ENCODE measurements at regions of chr2 and their contacts with region 1.

Region 1: GRCh38 chr2:119476301-119477021 is 44.8 kb downstream of the TMEM37 start:
- DNase-seq: peak; percentile 65
- H3K4me3 Mint-ChIP-seq: no peak overlapping the region
- H3K27ac Mint-ChIP-seq: no peak overlapping the region
- H3K4me1 Mint-ChIP-seq: peaks cover 5% of the 10 kb centered on the region
- H3K27me3 Mint-ChIP-seq: no peaks in the 10 kb centered on the region
- CTCF ChIP-seq: peak; percentile 98

Region 2: GRCh38 chr2:118738524-118739308 is 737.7 kb before region 1 on chr2:
- CTCF ChIA-PET with region 1: no interaction called
- POLR2A ChIA-PET with region 1: no interaction called
- intact Hi-C with region 1: no loop called
- DNase-seq: peak; percentile 97
- H3K4me3 Mint-ChIP-seq: no peak overlapping the region
- H3K27ac Mint-ChIP-seq: peak overlapping the region; percentile 39
- H3K4me1 Mint-ChIP-seq: peaks cover 16% of the 10 kb centered on the region
- H3K27me3 Mint-ChIP-seq: no peaks in the 10 kb centered on the region
- CTCF ChIP-seq: no peak

Region 3: GRCh38 chr2:119011162-119011909 is 465.1 kb before region 1 on chr2:
- CTCF ChIA-PET with region 1: no interaction called
- POLR2A ChIA-PET with region 1: no interaction called
- intact Hi-C with region 1: loop called (anchors 5 kb)
- DNase-seq: no peak
- H3K4me3 Mint-ChIP-seq: no peak overlapping the region
- H3K27ac Mint-ChIP-seq: no peak overlapping the region
- H3K4me1 Mint-ChIP-seq: no peaks in the 10 kb centered on the region
- H3K27me3 Mint-ChIP-seq: peaks cover 37% of the 10 kb centered on the region
- CTCF ChIP-seq: peak; percentile 24

Region 4: DNA sequence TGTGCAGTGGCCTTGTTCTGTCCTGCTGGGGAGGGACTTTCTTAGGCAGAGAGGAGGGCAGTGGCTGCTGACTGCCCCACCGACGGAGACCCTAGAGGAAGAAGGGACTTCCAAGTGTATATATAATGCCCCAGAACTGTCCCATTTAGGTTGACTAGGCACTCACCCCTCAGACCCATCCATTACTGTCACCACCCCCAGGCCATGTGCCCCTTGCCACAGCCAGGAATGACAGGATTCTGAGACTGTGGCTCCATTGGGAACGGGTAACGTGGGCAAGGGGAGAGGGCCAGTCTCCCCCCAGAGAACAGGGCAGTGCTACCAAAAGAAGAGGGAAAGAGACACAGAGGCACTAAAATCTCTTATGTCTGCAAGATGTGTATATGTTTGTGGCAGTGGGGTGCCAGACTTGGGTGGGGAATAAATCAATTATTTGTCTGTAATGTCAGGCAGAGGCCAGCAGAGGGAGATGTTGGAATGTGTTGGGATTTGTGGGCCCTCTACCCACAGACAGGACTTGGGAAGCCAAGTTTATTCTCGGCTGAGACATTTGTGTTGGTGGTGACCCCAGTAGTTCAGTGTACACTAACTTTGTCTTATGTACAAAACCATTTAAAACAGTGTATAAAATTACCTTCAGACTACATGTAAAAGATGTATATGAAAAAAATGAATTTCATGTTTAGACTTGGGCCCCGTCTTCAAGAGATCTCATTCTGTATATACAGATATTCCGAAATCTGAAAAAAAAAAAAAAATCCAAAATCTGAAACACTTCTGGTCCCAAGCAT is 68.8 kb before region 1 on chr2:
- CTCF ChIA-PET with region 1: interaction called, 124 read pairs
- POLR2A ChIA-PET with region 1: interaction called, 7 read pairs
- intact Hi-C with region 1: loop called (anchors 1 kb)
- DNase-seq: peak; percentile 64
- H3K4me3 Mint-ChIP-seq: no peak overlapping the region
- H3K27ac Mint-ChIP-seq: no peak overlapping the region
- H3K4me1 Mint-ChIP-seq: peaks cover 6% of the 10 kb centered on the region
- H3K27me3 Mint-ChIP-seq: no peaks in the 10 kb centered on the region
- CTCF ChIP-seq: peak; percentile 66

Region 5: GRCh38 chr2:119414894-119415293 is 61.6 kb before region 1 on chr2:
- CTCF ChIA-PET with region 1: interaction called, 124 read pairs
- POLR2A ChIA-PET with region 1: interaction called, 7 read pairs
- intact Hi-C with region 1: no loop called
- DNase-seq: no peak
- H3K4me3 Mint-ChIP-seq: no peak overlapping the region
- H3K27ac Mint-ChIP-seq: no peak overlapping the region
- H3K4me1 Mint-ChIP-seq: no peaks in the 10 kb centered on the region
- H3K27me3 Mint-ChIP-seq: no peaks in the 10 kb centered on the region
- CTCF ChIP-seq: no peak

Region 6: GRCh38 chr2:119441376-119442225 is 34.9 kb before region 1 on chr2:
- CTCF ChIA-PET with region 1: interaction called, 12 read pairs
- POLR2A ChIA-PET with region 1: no interaction called
- intact Hi-C with region 1: no loop called
- DNase-seq: no peak
- H3K4me3 Mint-ChIP-seq: no peak overlapping the region
- H3K27ac Mint-ChIP-seq: no peak overlapping the region
- H3K4me1 Mint-ChIP-seq: no peaks in the 10 kb centered on the region
- H3K27me3 Mint-ChIP-seq: no peaks in the 10 kb centered on the region
- CTCF ChIP-seq: no peak

Region 7: GRCh38 chr2:119459841-119460475 is 16.5 kb before region 1 on chr2:
- CTCF ChIA-PET with region 1: interaction called, 41 read pairs
- POLR2A ChIA-PET with region 1: no interaction called
- intact Hi-C with region 1: no loop called
- DNase-seq: no peak
- H3K4me3 Mint-ChIP-seq: no peak overlapping the region
- H3K27ac Mint-ChIP-seq: no peak overlapping the region
- H3K4me1 Mint-ChIP-seq: peaks cover 6% of the 10 kb centered on the region
- H3K27me3 Mint-ChIP-seq: no peaks in the 10 kb centered on the region
- CTCF ChIP-seq: no peak

Region 8: DNA sequence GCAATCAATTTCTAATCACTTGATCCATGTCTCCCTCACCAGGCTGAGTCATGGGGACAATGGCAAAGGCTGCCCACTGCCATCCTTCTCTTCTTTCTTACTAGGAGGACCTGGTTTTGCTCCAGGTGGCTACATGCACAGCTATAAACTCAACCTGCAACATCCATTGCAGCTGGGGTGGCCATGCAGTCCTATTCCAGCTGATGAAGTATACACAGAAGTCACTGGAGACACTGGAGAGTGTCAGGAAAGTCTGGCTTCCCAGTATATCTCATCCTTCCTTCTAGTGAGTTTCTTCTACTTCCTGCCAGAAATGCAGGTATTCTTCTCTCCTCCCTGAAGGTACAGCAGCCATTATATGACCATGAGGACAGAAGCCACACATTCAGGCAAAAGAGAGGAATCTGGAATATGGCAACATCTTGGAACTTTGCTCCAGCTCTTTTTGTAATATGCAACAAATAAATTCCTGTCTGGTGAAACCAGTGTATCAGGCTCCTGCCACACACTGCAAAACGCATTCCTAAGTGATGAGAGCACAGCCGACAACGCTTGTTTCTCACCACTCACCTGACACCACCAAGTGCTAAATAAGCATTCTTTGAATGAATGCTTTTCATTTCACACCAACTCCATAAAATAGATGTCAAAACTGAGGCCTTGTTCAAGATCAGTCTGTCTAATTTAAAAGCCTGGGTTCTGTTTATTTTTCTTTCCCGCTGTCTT is 15.5 kb after region 1 on chr2:
- CTCF ChIA-PET with region 1: interaction called, 55 read pairs
- POLR2A ChIA-PET with region 1: interaction called, 5 read pairs
- intact Hi-C with region 1: no loop called
- DNase-seq: peak; percentile 81
- H3K4me3 Mint-ChIP-seq: no peak overlapping the region
- H3K27ac Mint-ChIP-seq: peak overlapping the region; percentile 77
- H3K4me1 Mint-ChIP-seq: peaks cover 36% of the 10 kb centered on the region
- H3K27me3 Mint-ChIP-seq: peaks cover 2% of the 10 kb centered on the region
- CTCF ChIP-seq: no peak

Region 9: DNA sequence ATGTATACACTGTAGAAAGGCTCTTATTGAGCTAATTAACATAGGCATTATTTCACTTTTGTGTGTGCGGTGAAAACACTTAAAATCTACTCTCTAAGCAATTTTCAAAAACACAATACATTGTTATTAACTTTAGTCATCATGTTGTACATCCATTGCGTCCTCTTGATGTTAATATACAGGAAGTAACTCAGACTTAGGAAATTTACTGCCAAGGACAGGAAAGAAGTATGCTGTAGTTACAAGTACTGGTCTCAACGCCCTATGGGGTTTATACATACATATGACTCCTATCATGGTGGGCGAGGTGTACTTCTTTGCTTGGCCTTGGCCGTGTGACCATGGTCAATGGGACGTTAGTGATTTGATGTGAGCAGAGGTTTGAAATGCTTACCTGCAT is 32.3 kb after region 1 on chr2:
- CTCF ChIA-PET with region 1: no interaction called
- POLR2A ChIA-PET with region 1: no interaction called
- intact Hi-C with region 1: no loop called
- DNase-seq: no peak
- H3K4me3 Mint-ChIP-seq: no peak overlapping the region
- H3K27ac Mint-ChIP-seq: no peak overlapping the region
- H3K4me1 Mint-ChIP-seq: no peaks in the 10 kb centered on the region
- H3K27me3 Mint-ChIP-seq: peaks cover 18% of the 10 kb centered on the region
- CTCF ChIP-seq: no peak

Region 10: DNA sequence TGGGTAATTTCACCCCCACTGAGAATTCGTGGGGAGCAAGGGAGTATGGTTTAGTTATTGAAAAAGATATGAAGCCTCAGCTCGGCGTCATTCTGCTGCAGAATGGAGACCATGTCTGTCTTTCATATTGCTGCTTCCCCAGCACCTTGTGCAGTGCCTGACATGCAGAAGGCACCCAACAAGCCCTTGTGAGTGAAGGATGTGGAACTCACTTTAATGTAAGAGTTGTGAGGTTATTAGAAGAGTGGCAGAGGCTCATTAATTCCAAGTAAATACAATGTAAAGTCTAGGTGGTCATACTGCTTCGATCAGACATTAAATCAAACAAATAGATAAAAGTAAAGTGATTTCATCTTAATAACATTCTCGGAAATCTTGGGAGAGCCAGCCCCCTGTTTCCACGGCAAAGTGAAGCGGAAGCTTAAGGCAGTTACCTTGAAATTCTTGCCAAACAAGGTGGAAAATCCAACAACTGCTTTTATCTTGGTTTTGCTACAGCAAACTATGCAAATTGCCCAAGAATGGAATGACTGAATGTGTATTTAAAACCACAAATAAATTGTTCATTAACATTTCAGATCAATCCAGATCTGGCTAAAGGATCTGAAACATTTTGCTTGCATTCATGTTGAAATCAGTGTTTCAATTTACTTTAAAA is 77.4 kb after region 1 on chr2:
- CTCF ChIA-PET with region 1: no interaction called
- POLR2A ChIA-PET with region 1: no interaction called
- intact Hi-C with region 1: no loop called
- DNase-seq: no peak
- H3K4me3 Mint-ChIP-seq: no peak overlapping the region
- H3K27ac Mint-ChIP-seq: no peak overlapping the region
- H3K4me1 Mint-ChIP-seq: no peaks in the 10 kb centered on the region
- H3K27me3 Mint-ChIP-seq: peaks cover 17% of the 10 kb centered on the region
- CTCF ChIP-seq: no peak

Measured in MCF 10A (cell line).